ENCODE measurements at regions of chr15 and their contacts with region 1.

Region 1: DNA sequence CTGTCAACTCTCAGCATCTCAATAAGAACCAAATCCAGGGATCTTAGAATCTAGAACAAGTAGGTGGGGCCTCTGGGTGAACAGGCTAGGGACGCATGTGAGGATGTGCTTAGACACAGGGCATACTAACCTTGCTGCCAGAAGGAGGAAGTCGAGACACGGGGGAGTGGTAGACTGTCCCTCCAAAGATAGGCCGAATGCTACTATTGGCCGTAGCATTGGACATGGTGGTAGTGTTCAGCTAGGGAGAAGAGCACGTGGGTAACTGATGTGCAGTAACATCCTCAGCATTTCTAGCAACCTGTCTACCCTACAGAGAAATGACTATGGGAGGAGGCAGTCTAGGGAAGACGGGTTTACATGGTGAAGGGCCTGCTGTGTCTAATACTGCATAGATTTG is 15.6 kb downstream of the RCCD1 start:
- DNase-seq: no peak
- H3K4me3 Mint-ChIP-seq: no peak overlapping the region
- H3K27ac Mint-ChIP-seq: no peak overlapping the region
- H3K4me1 Mint-ChIP-seq: no peaks in the 10 kb centered on the region
- H3K27me3 Mint-ChIP-seq: no peaks in the 10 kb centered on the region

Region 2: DNA sequence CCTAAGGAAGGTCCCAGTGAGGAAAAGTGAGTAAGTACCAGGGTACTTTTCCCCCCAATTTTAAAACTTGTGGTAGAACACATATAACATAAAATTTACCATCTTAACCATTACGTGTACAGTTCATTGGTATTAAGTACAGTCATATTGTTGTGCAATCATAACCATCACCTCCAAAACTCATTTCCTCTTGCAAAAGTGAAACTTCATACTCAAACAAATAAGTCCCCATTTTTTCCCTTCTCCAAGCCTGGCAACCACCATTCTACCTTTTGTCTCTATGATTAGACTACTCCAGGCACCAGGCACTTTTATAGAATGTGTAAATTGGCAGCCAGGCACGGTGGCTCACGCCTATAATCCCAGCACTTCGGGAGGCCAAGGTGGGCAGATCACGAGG is 11.9 kb after region 1 on chr15:
- CTCF ChIA-PET with region 1: no interaction called
- POLR2A ChIA-PET with region 1: interaction called, 19 read pairs
- DNase-seq: no peak
- H3K4me3 Mint-ChIP-seq: no peak overlapping the region
- H3K27ac Mint-ChIP-seq: peak overlapping the region; percentile 75
- H3K4me1 Mint-ChIP-seq: peaks cover 39% of the 10 kb centered on the region
- H3K27me3 Mint-ChIP-seq: no peaks in the 10 kb centered on the region

Measured in activated CD4-positive, alpha-beta memory T cell treated with anti-CD3 and anti-CD28 coated beads, Interleukin-2, amount 10 ng/mL, durations not matched to agents 7 days and 5 days (primary cell).